SK-N-SH (cell line): ENCODE measurements at regions of chr11 and their contacts with region 1.

Region 1: DNA sequence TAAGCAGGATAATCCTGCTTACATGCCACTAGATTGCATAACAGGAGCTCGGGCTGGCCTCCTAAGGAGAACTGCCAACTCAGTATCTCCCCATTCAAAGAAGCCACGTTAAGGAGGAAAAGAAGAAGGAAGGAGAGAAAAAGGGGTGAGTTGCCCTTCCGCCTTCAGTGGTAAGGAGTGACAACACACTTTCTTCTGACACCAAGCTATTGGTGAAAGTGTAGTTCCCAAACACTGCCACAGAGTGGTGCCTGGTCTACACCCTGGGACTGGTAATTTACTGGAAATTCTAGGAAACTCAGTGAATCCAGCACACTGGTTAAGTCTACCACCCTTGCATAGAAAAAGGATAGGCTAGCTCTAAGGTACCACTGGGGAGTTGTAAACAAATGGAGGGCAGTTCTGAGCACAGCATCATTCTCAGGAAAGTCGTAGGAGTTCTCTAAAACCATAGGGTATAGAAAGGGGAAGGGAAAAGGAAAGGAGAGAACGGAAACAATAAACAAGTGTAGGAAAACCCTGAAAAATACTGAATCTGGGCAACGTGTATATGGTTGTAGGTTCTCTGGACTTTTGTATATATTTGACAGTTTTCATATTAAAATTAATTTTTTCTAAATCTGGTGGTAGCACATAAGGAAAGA is 58.2 kb downstream of the RRAS2 start:
- DNase-seq: peak; percentile 61
- H3K4me3 ChIP-seq: peak overlapping the region in 1 of 2 experiments; percentile 6; a peak in 2 of 4 replicates
- H3K27ac ChIP-seq: no peak overlapping the region
- H3K4me1 ChIP-seq: peaks cover 2 to 17% of the 10 kb centered on the region in 2 experiments; a peak in 1 of 4 replicates
- H3K27me3 ChIP-seq: no peaks in the 10 kb centered on the region
- CTCF ChIP-seq: peak; percentile 84
- EP300 ChIP-seq: no peak
- RAD21 ChIP-seq: peak; percentile 97

Region 2: DNA sequence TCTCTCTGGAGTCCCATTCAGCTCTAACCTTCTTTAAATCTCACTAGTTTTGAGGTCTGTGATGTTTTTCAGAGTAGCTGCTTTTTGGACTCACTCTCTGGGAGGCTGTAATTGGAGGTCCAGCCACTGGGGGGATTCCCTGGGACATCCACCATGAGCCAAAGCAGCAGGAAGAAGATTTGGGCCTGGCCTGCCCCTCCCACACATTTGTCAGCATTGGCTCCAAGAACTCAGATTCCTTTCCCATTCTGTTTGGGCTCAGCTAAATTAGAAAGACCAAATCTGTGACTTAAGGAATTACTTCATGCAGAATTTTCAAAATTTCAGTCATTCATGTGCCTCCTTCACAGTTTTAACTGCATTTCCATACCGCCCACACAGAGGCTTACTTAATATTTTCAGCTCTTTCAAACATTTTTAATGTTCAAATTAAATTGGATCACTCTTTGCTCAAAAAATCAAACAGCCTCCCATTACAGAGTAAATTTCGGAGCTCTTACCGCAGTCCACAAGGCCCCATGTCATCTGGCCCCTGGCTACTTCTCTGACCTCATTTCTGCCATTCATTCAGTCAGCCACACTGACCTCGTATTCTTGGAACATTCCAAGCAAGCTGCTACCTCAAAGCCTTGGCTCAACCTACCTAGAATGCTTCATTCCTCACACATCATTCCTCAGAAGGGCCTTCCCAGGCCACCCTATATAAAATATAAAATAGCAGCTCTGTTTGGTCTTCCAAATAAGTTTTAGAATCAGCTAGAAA is 112.7 kb after region 1 on chr11:
- CTCF ChIA-PET with region 1: interaction called, 62 read pairs
- POLR2A ChIA-PET with region 1: no interaction called
- DNase-seq: no peak
- H3K4me3 ChIP-seq: no peak overlapping the region
- H3K27ac ChIP-seq: no peak overlapping the region
- H3K4me1 ChIP-seq: peaks cover 8 to 12% of the 10 kb centered on the region in 2 experiments; a peak in 3 of 4 replicates
- H3K27me3 ChIP-seq: no peaks in the 10 kb centered on the region
- CTCF ChIP-seq: peak; percentile 43
- EP300 ChIP-seq: no peak
- RAD21 ChIP-seq: no peak

Region 3: DNA sequence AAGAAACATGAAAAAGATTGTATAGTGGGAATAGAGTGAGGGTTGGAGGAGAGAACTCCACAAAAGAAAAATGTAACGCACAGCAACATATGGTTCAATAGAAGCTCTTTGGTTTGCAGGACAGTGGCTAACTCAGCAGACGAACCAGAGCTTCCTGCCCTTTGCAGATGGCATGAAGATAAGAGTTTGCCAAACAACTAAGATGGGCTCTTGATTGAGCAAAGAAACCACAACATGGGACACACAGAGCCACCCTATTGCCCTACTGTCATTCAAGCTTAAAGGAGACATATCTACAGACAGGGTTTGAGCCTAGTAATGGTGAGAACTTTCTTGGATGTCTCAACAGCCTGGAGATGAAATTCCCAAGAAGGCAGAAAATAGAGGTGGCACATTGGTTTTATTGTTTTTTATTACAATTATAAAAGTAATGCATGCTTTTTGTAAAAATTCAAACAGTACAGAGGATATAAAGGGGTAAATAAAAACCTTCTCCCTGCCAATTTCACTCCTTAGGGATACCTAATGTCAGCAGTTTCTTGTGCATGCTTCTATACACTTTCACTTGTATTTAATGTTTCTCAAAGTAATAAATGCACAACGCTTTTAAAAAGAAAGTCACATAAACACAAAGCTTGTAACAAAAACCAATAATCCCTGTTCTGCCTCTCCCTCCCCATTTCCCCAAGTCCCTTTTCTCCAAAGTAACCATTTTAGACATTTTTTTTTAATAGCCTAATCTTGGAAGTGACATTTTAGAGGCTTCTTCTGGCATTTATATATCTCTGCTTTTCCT is 135.1 kb after region 1 on chr11:
- CTCF ChIA-PET with region 1: interaction called, 22 read pairs
- POLR2A ChIA-PET with region 1: no interaction called
- DNase-seq: no peak
- H3K4me3 ChIP-seq: no peak overlapping the region
- H3K27ac ChIP-seq: no peak overlapping the region
- H3K4me1 ChIP-seq: no peaks in the 10 kb centered on the region
- H3K27me3 ChIP-seq: no peaks in the 10 kb centered on the region
- CTCF ChIP-seq: no peak
- EP300 ChIP-seq: no peak
- RAD21 ChIP-seq: no peak

Region 4: GRCh38 chr11:14449302-14449714 is 148.5 kb after region 1 on chr11:
- CTCF ChIA-PET with region 1: interaction called, 89 read pairs
- POLR2A ChIA-PET with region 1: no interaction called
- DNase-seq: peak; percentile 5
- H3K4me3 ChIP-seq: no peak overlapping the region
- H3K27ac ChIP-seq: peak overlapping the region; percentile 23 to 89; a peak in 3 of 4 replicates
- H3K4me1 ChIP-seq: peaks cover 0 to 26% of the 10 kb centered on the region in 2 experiments; a peak in 2 of 4 replicates
- H3K27me3 ChIP-seq: no peaks in the 10 kb centered on the region
- CTCF ChIP-seq: no peak
- EP300 ChIP-seq: peak in 1 of 2 experiments; percentile 58; a peak in 1 of 4 replicates
- RAD21 ChIP-seq: no peak

Region 5: DNA sequence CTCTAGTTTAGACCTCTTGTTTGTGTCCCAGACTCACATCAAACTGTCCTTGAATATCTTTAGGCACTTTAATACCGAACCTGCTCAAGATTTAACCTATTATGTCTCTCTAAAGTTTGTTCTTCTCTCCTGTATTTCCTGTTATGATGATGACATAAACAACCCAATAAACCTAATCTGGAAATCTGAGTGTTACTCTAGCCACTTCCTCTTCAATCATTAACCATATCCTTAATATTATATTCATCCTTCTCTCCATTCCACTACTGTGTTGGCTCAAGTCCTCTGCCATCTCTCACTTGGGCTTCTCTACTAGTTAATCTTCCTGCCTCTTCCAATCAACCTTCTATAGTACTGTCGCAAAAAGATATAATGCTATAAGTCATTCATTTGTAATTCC is 162.8 kb after region 1 on chr11:
- CTCF ChIA-PET with region 1: interaction called, 21 read pairs
- POLR2A ChIA-PET with region 1: no interaction called
- DNase-seq: no peak
- H3K4me3 ChIP-seq: no peak overlapping the region
- H3K27ac ChIP-seq: no peak overlapping the region
- H3K4me1 ChIP-seq: no peaks in the 10 kb centered on the region
- H3K27me3 ChIP-seq: no peaks in the 10 kb centered on the region
- CTCF ChIP-seq: no peak
- EP300 ChIP-seq: no peak
- RAD21 ChIP-seq: no peak